ENCODE measurements at regions of chr11 and their contacts with region 1.

Region 1: GRCh38 chr11:35204614-35205013 is 65.6 kb downstream of the CD44 start:
- DNase-seq: no peak
- ATAC-seq: no peak
- H3K4me3 Mint-ChIP-seq: no peak overlapping the region
- H3K27ac Mint-ChIP-seq: peak overlapping the region; percentile 12
- H3K4me1 Mint-ChIP-seq: peaks cover 24% of the 10 kb centered on the region
- H3K27me3 Mint-ChIP-seq: no peaks in the 10 kb centered on the region
- CTCF ChIP-seq: no peak

Region 2: GRCh38 chr11:35214792-35215193 is 10.2 kb after region 1 on chr11:
- CTCF ChIA-PET with region 1: no interaction called
- POLR2A ChIA-PET with region 1: no interaction called
- intact Hi-C with region 1: loop called (anchors 1 kb)
- DNase-seq: no peak
- ATAC-seq: peak; percentile 32
- H3K4me3 Mint-ChIP-seq: peak overlapping the region; percentile 44
- H3K27ac Mint-ChIP-seq: peak overlapping the region; percentile 70
- H3K4me1 Mint-ChIP-seq: peaks cover 82% of the 10 kb centered on the region
- H3K27me3 Mint-ChIP-seq: no peaks in the 10 kb centered on the region
- CTCF ChIP-seq: no peak

Region 3: GRCh38 chr11:35288817-35289541 is 84.4 kb after region 1 on chr11:
- CTCF ChIA-PET with region 1: no interaction called
- POLR2A ChIA-PET with region 1: no interaction called
- intact Hi-C with region 1: no loop called
- DNase-seq: no peak
- ATAC-seq: peak; percentile 28
- H3K4me3 Mint-ChIP-seq: no peak overlapping the region
- H3K27ac Mint-ChIP-seq: no peak overlapping the region
- H3K4me1 Mint-ChIP-seq: peaks cover 17% of the 10 kb centered on the region
- H3K27me3 Mint-ChIP-seq: no peaks in the 10 kb centered on the region
- CTCF ChIP-seq: no peak

Region 4: DNA sequence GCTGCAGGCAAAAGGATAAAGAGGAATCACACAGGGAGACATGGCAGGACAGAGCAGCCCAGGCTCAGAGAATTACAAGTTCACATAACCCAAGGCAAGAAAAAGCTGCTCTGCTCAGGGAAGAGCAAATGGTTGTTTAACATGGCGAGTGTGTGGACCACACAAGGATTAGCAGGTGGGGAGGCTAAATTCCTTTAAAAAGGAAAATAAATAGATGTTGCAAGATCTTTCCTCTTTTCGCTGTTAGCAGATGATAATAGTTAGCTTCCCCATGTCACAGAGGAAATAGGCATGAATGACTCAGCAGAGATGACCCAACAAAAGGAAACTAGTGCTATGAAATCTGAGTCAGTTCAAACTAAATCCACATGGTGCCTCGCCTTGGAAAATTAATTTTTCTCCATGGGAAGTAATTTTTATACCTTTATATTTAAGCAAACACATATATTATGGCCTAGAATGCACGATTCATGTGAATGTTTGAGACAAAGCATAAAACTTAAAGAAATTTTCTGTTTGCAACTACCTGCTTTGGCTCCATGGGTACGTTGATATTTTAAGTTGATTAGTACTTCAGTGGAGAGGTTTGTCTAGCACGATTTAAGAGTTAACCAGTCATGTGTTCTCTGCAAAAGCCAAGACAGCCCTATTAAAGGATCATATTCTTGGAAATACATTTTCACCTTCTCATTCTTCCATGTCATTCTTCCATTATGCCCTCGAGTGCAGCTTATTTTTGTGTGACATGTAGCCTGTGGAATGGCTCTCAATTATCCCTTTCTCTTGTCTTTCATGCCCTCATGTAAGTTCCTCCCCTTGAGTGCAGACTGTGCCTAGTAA is 375.2 kb after region 1 on chr11:
- CTCF ChIA-PET with region 1: no interaction called
- POLR2A ChIA-PET with region 1: no interaction called
- intact Hi-C with region 1: no loop called
- DNase-seq: no peak
- ATAC-seq: no peak
- H3K4me3 Mint-ChIP-seq: no peak overlapping the region
- H3K27ac Mint-ChIP-seq: no peak overlapping the region
- H3K4me1 Mint-ChIP-seq: no peaks in the 10 kb centered on the region
- H3K27me3 Mint-ChIP-seq: peaks cover 23% of the 10 kb centered on the region
- CTCF ChIP-seq: no peak

Measured in activated B cell treated with CpG ODN at 0.5 μM for 24 hours (primary cell).